GM12878 (cell line): ENCODE measurements at regions of chr14 and their contacts with region 1.

Region 1: DNA sequence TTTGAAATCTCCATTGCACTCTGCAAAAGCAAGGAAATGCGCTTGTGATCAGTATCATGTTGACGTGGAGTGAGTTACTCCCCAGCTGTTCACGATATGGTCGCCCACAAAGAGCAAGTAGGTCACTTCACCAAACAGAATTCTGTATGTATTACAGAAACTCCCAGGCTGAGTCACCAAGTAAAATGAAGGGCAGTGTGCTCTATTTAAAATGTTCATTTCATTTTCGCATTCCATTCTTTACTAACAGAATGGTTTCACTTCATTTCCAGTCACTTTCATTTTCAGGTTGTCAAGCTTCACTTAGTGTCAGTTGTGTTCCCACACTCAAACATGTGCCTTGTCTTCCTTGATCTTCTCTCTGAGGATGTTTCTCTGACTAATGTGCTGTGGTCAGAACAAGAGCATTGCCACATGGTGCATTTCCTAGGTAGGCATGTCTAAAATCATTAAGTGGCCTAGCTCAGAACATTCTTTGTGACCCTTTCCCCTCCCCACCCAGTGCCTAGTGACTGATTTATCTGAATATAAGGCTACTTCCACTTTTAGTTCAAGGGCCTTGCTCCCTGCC is 391.2 kb downstream of the RAD51B start:
- DNase-seq: peak; percentile 100
- ATAC-seq: peak; percentile 93
- H3K4me3 ChIP-seq: peak overlapping the region; percentile 22; the same call in 1 of the 2 replicates
- H3K27ac ChIP-seq: peak overlapping the region; percentile 86
- H3K4me1 ChIP-seq: peaks cover 58% of the 10 kb centered on the region
- H3K27me3 ChIP-seq: no peaks in the 10 kb centered on the region
- CTCF ChIP-seq: no peak
- EP300 ChIP-seq: peak; percentile 68 to 81
- POLR2A ChIP-seq: no peak
- RAD21 ChIP-seq: 0 out of 2 replicates have a peak, but pooled peaks have one; percentile 17

Region 2: GRCh38 chr14:68084256-68084655 is 126.6 kb before region 1 on chr14:
- CTCF ChIA-PET with region 1: interaction called, 3 read pairs
- POLR2A ChIA-PET with region 1: no interaction called
- RAD21 ChIA-PET with region 1: no interaction called
- SMC1A ChIA-PET with region 1: interaction called, 5 read pairs
- in situ Hi-C with region 1: no loop called
- intact Hi-C with region 1: loop called (anchors 10 kb)
- DNase-seq: no peak
- ATAC-seq: peak; percentile 69
- H3K4me3 ChIP-seq: no peak overlapping the region
- H3K27ac ChIP-seq: no peak overlapping the region
- H3K4me1 ChIP-seq: no peaks in the 10 kb centered on the region
- H3K27me3 ChIP-seq: no peaks in the 10 kb centered on the region
- CTCF ChIP-seq: peak in 2 of 3 experiments; percentile 30 to 36; a peak in 3 of 6 replicates
- EP300 ChIP-seq: no peak
- POLR2A ChIP-seq: no peak
- RAD21 ChIP-seq: peak; percentile 65

Region 3: GRCh38 chr14:68144051-68144681 is 66.6 kb before region 1 on chr14:
- CTCF ChIA-PET with region 1: no interaction called
- POLR2A ChIA-PET with region 1: no interaction called
- RAD21 ChIA-PET with region 1: no interaction called
- SMC1A ChIA-PET with region 1: no interaction called
- in situ Hi-C with region 1: no loop called
- intact Hi-C with region 1: no loop called
- DNase-seq: no peak
- ATAC-seq: no peak
- H3K4me3 ChIP-seq: no peak overlapping the region
- H3K27ac ChIP-seq: no peak overlapping the region
- H3K4me1 ChIP-seq: no peaks in the 10 kb centered on the region
- H3K27me3 ChIP-seq: no peaks in the 10 kb centered on the region
- CTCF ChIP-seq: no peak
- EP300 ChIP-seq: no peak
- POLR2A ChIP-seq: no peak
- RAD21 ChIP-seq: no peak

Region 4: DNA sequence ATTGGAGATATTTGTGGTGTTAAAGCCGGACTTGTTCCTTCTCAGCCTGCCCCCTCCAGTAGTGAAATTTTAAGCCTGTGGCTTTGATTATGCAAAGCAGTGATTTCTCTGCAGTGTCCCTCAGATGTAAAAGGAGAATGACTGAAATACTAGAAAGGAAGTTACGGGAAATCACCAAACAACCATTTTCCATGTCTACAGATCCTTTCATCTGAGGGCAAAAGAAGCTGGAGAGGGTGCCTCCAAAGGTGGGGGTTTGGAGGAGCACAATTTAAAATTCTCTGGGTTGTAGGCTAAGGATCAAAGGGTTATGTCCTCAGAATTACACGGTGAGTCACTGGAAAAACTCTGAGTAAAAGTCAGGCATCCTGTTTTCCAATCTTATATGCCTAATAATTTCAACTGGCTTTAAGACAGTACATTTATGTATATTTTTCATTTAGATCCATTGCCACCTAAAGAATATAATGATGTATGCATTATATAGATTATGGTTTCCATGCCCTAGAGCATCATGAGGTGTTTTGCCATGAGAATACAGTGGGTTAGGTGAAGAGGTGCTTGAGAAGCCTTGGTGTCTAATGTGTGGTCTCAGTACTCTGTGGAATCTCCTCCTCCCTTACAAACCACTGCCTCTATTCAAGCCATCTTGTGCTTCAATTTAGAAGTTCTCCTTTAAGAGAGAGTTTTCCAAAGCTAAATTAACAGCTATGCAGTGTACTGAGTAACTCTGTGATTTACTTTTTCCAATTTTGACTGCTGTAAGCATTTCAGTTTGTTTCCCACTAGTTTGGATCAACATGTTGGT is 29.1 kb before region 1 on chr14:
- CTCF ChIA-PET with region 1: interaction called, 3 read pairs
- POLR2A ChIA-PET with region 1: no interaction called
- RAD21 ChIA-PET with region 1: no interaction called
- SMC1A ChIA-PET with region 1: interaction called, 9 read pairs
- in situ Hi-C with region 1: no loop called
- intact Hi-C with region 1: loop called (anchors 2 kb)
- DNase-seq: peak; percentile 48
- ATAC-seq: peak; percentile 79
- H3K4me3 ChIP-seq: peak overlapping the region; percentile 47
- H3K27ac ChIP-seq: peak overlapping the region; percentile 56
- H3K4me1 ChIP-seq: peaks cover 21% of the 10 kb centered on the region
- H3K27me3 ChIP-seq: no peaks in the 10 kb centered on the region
- CTCF ChIP-seq: no peak
- EP300 ChIP-seq: no peak
- POLR2A ChIP-seq: no peak
- RAD21 ChIP-seq: no peak

Region 5: GRCh38 chr14:68232300-68233055 is 21.7 kb after region 1 on chr14:
- CTCF ChIA-PET with region 1: interaction called, 7 read pairs
- POLR2A ChIA-PET with region 1: interaction called, 7 read pairs
- RAD21 ChIA-PET with region 1: interaction called, 16 read pairs
- SMC1A ChIA-PET with region 1: interaction called, 23 read pairs
- in situ Hi-C with region 1: no loop called
- intact Hi-C with region 1: loop called (anchors 1 kb)
- DNase-seq: peak; percentile 99
- ATAC-seq: peak; percentile 97
- H3K4me3 ChIP-seq: no peak overlapping the region
- H3K27ac ChIP-seq: peak overlapping the region; percentile 84
- H3K4me1 ChIP-seq: peaks cover 19% of the 10 kb centered on the region
- H3K27me3 ChIP-seq: no peaks in the 10 kb centered on the region
- CTCF ChIP-seq: no peak
- EP300 ChIP-seq: peak; percentile 84 to 87
- POLR2A ChIP-seq: no peak
- RAD21 ChIP-seq: no peak

Region 6: DNA sequence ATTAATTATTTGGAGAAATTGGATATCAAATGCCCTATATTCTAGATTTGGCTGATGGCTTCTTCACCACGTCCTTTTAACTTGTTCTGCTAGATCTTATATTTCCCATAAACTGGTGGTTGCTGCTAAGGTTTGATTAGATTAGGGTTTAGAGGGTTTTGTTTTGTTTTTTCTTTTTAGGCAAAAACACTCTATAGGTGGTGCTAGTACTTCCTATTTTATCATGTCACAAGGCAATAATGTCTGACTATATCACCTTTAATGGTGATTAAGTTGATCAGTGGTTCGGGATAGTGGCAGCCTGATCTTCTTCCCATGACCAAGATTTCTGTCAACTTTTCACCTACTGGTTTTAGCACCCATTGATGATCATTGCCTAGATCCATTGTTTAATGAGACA is 63.9 kb after region 1 on chr14:
- CTCF ChIA-PET with region 1: no interaction called
- POLR2A ChIA-PET with region 1: interaction called, 5 read pairs
- RAD21 ChIA-PET with region 1: interaction called, 3 read pairs
- SMC1A ChIA-PET with region 1: interaction called, 13 read pairs
- in situ Hi-C with region 1: no loop called
- intact Hi-C with region 1: loop called (anchors 2 kb)
- DNase-seq: no peak
- ATAC-seq: no peak
- H3K4me3 ChIP-seq: no peak overlapping the region
- H3K27ac ChIP-seq: peak overlapping the region; percentile 91
- H3K4me1 ChIP-seq: peaks cover 78% of the 10 kb centered on the region
- H3K27me3 ChIP-seq: no peaks in the 10 kb centered on the region
- CTCF ChIP-seq: peak in 1 of 3 experiments; percentile 22; a peak in 1 of 6 replicates
- EP300 ChIP-seq: no peak
- POLR2A ChIP-seq: no peak
- RAD21 ChIP-seq: 0 out of 2 replicates have a peak, but pooled peaks have one; percentile 21